ENCODE measurements at regions of chr1 and their contacts with region 1.

Region 1: GRCh38 chr1:167401260-167401873 is 117.0 kb downstream of the CD247 start:
- DNase-seq: peak; percentile 83
- H3K4me3 Mint-ChIP-seq: no peak overlapping the region
- H3K27ac Mint-ChIP-seq: no peak overlapping the region
- H3K4me1 Mint-ChIP-seq: no peaks in the 10 kb centered on the region
- H3K27me3 Mint-ChIP-seq: no peaks in the 10 kb centered on the region

Region 2: GRCh38 chr1:167442124-167442848 is 40.9 kb after region 1 on chr1:
- intact Hi-C with region 1: loop called (anchors 5 kb)
- DNase-seq: peak; percentile 95
- H3K4me3 Mint-ChIP-seq: peak overlapping the region; percentile 21
- H3K27ac Mint-ChIP-seq: peak overlapping the region; percentile 50
- H3K4me1 Mint-ChIP-seq: peaks cover 73% of the 10 kb centered on the region
- H3K27me3 Mint-ChIP-seq: no peaks in the 10 kb centered on the region

Region 3: DNA sequence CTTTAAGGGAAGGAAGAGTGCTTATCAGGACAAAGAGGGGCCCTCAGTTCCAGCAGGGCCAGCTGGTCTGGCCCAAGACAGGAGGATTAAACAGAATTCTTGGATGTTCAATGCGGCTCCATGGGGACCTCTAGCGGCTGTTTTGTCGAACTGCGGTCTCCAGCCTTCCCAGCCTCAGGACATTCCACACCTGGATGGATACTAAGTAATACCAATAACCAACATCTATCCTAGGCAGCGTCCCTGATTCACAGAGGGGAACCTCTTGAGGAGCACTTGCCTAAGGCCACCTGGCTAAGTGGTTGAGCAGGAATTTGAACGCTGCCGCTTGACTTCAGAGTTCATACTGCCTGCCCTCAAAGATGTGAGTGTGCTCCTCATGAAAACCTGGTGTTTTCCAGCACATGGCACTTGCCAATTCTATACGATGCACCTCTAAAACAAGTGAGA is 132.5 kb after region 1 on chr1:
- intact Hi-C with region 1: loop called (anchors 1 kb)
- DNase-seq: peak; percentile 89
- H3K4me3 Mint-ChIP-seq: no peak overlapping the region
- H3K27ac Mint-ChIP-seq: no peak overlapping the region
- H3K4me1 Mint-ChIP-seq: peaks cover 7% of the 10 kb centered on the region
- H3K27me3 Mint-ChIP-seq: peaks cover 1% of the 10 kb centered on the region

Region 4: GRCh38 chr1:167553136-167554027 is 152.0 kb after region 1 on chr1 and contains the start of gene CREG1:
- intact Hi-C with region 1: loop called (anchors 1 kb)
- DNase-seq: peak; percentile 98
- H3K4me3 Mint-ChIP-seq: peak within 1 kb of the TSS; percentile 88
- H3K27ac Mint-ChIP-seq: no peak within 1 kb of the TSS
- H3K4me1 Mint-ChIP-seq: peaks cover 26% of the 10 kb centered on the region
- H3K27me3 Mint-ChIP-seq: peaks cover 6% of the 10 kb centered on the region
- total RNA-seq, gene CREG1: 12.3 and 13.6 TPM in 2 replicates

Measured in activated CD4-positive, alpha-beta T cell treated with anti-CD3 and anti-CD28 coated beads, Interleukin-2, amount 10 ng/mL, durations not matched to agents 24 days and 14 days (primary cell).